ENCODE measurements at regions of chr2 and their contacts with region 1.

Region 1: DNA sequence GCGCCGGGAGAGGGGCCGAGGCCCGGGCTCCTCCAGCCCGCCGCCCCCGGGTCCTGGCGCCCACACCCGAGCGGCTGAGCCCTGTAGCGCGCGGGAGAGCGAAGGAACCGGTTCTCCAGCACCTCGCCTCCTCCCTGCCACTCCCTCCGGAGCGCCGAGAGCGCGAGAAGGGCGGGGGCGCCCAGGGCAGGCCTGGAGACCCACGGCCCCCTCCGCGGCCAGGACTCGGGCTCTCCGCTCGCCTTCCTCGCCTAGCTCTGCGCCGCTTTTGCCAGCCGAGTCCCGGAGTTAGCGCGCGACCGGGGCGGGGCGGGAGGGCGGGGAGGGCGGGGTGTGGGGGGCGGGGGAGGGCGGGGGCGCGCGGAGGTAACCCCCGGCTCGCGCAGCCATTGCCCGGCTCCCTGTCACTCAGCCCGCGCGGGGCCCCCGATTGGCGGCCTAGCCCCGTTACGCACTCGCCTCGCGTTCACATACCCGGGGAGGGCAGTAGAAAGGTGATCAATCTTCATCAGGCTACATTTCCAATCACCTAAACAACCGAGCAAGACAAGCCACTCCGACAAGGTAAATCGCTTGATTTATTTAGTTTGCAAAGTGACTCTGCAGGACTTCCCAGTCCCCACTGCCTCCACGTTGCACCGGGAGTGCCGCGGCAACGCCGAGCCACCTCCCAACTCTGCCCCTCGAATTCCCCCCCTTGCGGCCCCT is at the start of gene OTX1:
- DNase-seq: no peak
- H3K4me3 ChIP-seq: peak within 1 kb of the TSS; percentile 47 to 71 (median 64)
- H3K27ac ChIP-seq: peak within 1 kb of the TSS in 1 of 2 donors; percentile 33
- H3K4me1 ChIP-seq: peaks cover 0 to 9% of the 10 kb centered on the region in 2 donors
- H3K27me3 ChIP-seq: peaks cover 3 to 73% of the 10 kb centered on the region in 2 donors
- CTCF ChIP-seq: no peak
- POLR2A ChIP-seq: no peak
- total RNA-seq, gene OTX1: not detected

Region 2: GRCh38 chr2:63121055-63121834 is 70.8 kb after region 1 on chr2:
- intact Hi-C with region 1: loop called (anchors 2 kb)
- DNase-seq: no peak
- H3K4me3 ChIP-seq: no peak overlapping the region
- H3K27ac ChIP-seq: no peak overlapping the region
- H3K4me1 ChIP-seq: no peaks in the 10 kb centered on the region
- H3K27me3 ChIP-seq: no peaks in the 10 kb centered on the region
- CTCF ChIP-seq: no peak
- POLR2A ChIP-seq: no peak